ENCODE measurements at regions of chr14 and their contacts with region 1.

Region 1: GRCh38 chr14:75088574-75089373 is 19.3 kb downstream of the ZC2HC1C start:
- DNase-seq: peak; percentile 57
- ATAC-seq: peak; percentile 66
- H3K4me3 Mint-ChIP-seq: no peak overlapping the region
- H3K27ac Mint-ChIP-seq: peak overlapping the region; percentile 40
- H3K4me1 Mint-ChIP-seq: no peaks in the 10 kb centered on the region
- H3K27me3 Mint-ChIP-seq: no peaks in the 10 kb centered on the region

Region 2: DNA sequence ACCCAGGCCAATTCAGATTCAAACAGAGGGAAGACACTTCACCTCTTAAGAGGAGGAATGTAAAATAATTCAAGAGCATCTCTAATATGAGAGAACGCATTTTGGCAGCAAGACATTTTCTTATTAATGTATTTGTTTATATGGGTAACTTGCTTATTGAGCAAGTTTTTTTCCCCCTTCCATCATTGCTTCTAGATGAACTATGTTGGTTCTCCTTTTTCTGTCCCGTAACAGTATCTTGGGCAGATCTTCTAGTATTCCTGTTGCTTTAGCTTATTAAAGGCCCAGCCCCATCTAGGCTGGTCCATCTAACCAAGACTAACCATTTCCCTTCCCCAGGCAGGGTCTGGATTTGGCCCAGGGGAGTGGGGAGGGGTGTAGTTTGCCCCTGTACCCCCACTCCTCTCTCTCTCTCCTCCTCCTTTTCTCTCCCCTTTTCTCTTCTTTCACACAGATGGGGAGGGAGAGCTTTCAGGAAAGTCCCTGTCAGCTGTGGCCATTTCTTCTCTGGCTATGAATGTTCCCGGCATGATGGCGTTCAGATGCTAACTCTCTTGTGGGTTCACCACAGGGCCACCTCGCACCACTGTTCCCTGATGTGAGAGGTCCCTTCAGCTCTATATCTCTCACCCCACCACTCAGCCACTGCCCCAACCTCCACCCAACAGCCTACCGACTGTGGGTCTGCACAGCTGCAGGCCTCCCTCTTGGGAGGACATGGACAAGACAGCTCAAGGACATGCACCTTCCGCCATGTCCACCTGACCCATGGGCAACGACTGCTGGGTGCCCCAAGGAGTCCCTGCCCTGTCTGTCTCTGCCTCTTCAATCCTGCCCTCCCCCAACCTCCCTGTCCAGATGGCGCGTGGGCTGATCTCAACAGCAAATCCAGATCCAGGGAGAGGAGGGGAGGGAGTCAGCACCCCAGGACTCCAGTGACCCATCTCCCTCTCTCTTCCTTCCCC is 150.0 kb before region 1 on chr14:
- CTCF ChIA-PET with region 1: interaction called, 86 read pairs
- DNase-seq: no peak
- ATAC-seq: no peak
- H3K4me3 Mint-ChIP-seq: no peak overlapping the region
- H3K27ac Mint-ChIP-seq: no peak overlapping the region
- H3K4me1 Mint-ChIP-seq: peaks cover 28% of the 10 kb centered on the region
- H3K27me3 Mint-ChIP-seq: no peaks in the 10 kb centered on the region

Region 3: DNA sequence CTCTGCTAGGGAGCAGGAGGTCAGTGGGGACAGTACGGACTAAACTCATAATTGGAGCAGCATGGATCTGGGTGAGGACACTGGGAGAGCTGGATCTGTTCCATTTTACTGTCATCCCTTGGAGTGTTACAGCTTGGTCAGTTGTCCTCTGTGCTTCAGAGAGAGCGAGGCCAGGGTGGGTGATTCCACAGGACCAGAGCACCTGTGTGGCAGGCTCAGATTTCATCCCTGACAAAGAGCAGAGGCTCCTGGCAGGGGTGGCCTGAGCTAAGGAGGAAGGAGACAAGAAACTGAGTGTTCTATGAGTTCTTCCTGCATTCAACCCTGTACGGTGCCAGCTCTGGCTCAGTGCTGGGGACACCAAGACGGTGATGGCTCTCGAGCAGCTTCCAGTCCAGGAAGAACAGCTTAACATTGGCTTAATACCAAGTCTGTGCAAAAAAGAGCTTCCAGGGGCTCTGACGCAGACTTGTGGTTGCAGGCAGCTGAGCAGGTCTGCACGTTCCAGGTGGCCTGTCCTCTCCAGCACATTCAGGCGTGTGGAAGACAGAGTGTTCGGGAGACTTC is 125.0 kb before region 1 on chr14:
- CTCF ChIA-PET with region 1: interaction called, 11 read pairs
- DNase-seq: no peak
- ATAC-seq: peak; percentile 23
- H3K4me3 Mint-ChIP-seq: no peak overlapping the region
- H3K27ac Mint-ChIP-seq: no peak overlapping the region
- H3K4me1 Mint-ChIP-seq: peaks cover 5% of the 10 kb centered on the region
- H3K27me3 Mint-ChIP-seq: peaks cover 29% of the 10 kb centered on the region

Region 4: DNA sequence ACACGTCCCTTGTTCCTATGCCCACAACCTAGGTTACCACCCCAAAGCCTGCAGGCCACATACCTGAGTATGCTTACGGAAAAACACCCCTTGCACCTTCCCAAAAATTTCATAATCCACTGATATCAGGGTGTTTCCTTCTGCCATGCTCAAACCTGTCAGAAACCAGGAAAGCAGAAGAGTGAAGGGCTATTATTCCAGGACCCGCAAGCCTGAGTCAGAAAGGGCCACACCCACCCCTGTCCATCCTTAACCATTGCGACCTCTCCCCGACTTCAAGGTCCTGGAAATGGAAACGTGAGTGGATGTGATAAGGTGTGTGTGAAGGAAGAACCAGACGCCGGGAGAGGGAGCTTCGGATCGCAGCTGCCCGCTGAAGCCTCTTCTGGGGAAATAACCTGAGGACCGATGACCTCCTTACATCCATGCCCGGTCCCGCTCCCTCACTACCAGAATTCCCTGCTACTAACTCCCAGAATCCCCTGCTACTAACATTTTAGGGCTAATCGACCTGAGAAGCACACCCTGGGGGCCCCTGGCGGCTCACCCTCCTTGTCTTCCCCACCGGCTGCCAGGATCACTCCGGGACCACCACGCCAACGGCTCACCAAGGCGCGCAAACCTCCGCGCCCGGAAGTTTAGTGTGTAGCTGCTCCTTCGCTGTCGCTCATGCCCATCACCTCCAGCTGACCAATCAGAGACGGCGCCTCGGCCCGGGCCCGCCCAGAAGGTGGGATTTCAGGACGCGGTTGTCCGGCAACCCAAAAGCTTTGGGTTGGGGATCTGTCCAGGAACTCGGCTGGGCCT is 25.2 kb before region 1 on chr14 and contains the start of gene ACYP1:
- CTCF ChIA-PET with region 1: interaction called, 20 read pairs
- DNase-seq: peak; percentile 95
- ATAC-seq: peak; percentile 99
- H3K4me3 Mint-ChIP-seq: peak within 1 kb of the TSS; percentile 100
- H3K27ac Mint-ChIP-seq: peak within 1 kb of the TSS; percentile 98
- H3K4me1 Mint-ChIP-seq: peaks cover 46% of the 10 kb centered on the region
- H3K27me3 Mint-ChIP-seq: no peaks in the 10 kb centered on the region
- total RNA-seq, gene ACYP1: 45.2 to 59.5 TPM

Region 5: DNA sequence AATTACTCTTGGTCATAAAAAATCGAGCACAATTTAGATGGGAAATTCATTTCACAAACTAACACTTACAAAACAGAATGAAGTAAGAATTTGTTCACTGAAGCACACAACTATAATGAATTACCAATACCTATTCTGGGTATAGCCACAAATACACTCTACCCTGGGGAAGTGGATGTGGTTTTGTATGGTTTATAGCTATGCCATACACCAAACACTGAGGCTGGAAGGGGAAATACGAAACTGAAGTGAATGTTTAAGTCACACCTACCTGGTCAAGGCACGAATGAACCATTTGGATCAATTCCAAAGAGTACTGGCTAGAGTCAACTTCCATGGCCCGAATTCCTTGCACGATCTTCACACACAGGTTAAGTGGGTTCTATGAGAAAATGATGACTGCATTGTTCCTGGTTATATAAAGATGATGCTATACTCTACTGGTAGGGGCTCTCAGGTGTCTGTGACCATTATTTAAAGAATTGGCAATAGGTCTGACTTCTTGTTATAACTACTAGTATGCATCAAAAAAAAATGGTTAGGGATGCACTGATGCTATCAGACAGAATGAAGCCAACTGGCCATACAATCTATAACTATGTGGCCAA is 25.3 kb after region 1 on chr14:
- CTCF ChIA-PET with region 1: no interaction called
- DNase-seq: peak; percentile 57
- ATAC-seq: peak; percentile 97
- H3K4me3 Mint-ChIP-seq: peak overlapping the region; percentile 8
- H3K27ac Mint-ChIP-seq: peak overlapping the region; percentile 78
- H3K4me1 Mint-ChIP-seq: peaks cover 22% of the 10 kb centered on the region
- H3K27me3 Mint-ChIP-seq: no peaks in the 10 kb centered on the region